Ovary (tissue), 10 donors: ENCODE measurements at regions of chr11 and their contacts with region 1.

Region 1: GRCh38 chr11:57277845-57278709 is 41.0 kb upstream of the APLNR start:
- DNase-seq: peak; percentile 58 to 75 (median 67)
- H3K4me3 ChIP-seq: no peak overlapping the region
- H3K27ac ChIP-seq: no peak overlapping the region
- H3K4me1 ChIP-seq: peaks cover 2% of the 10 kb centered on the region
- H3K27me3 ChIP-seq: no peaks in the 10 kb centered on the region
- CTCF ChIP-seq: peak; percentile 52 to 65 (median 60)
- EP300 ChIP-seq: no peak
- POLR2A ChIP-seq: no peak

Region 2: GRCh38 chr11:57349491-57350274 is 71.6 kb after region 1 on chr11:
- intact Hi-C with region 1: loop called in 1 of 4 experiments (anchors 10 kb)
- DNase-seq: peak; percentile 58 to 82 (median 74)
- H3K4me3 ChIP-seq: no peak overlapping the region
- H3K27ac ChIP-seq: no peak overlapping the region
- H3K4me1 ChIP-seq: peaks cover 3% of the 10 kb centered on the region
- H3K27me3 ChIP-seq: no peaks in the 10 kb centered on the region
- CTCF ChIP-seq: peak; percentile 70 to 78 (median 74)
- EP300 ChIP-seq: no peak
- POLR2A ChIP-seq: no peak